Gastrocnemius medialis (tissue), 4 donors: ENCODE measurements at regions of chr1 and their contacts with region 1.

Region 1: GRCh38 chr1:112126598-112126997 is 137.1 kb upstream of the KCND3 start:
- DNase-seq: no peak
- ATAC-seq: no peak
- H3K4me3 ChIP-seq: no peak overlapping the region
- H3K27ac ChIP-seq: no peak overlapping the region
- H3K4me1 ChIP-seq: no peaks in the 10 kb centered on the region
- H3K27me3 ChIP-seq: no peaks in the 10 kb centered on the region
- CTCF ChIP-seq: no peak
- POLR2A ChIP-seq: no peak

Region 2: DNA sequence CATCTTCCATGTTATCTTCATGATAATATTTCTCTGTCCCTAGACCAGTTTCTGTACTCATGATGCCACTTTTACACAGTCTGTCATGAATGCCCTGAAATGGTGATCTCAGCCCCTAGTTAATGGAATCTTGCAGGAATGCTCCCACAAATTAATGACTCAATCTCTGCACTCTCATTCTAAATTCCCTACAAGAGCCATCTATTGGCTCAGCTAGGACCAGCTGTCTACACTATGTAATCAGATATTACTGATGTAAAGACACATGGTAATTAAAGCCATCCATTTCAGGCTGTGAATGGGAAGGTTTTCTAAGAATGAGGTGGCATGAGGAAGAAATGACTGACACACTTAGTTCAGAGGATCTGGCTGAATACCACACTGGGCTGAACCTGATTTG is 62.0 kb after region 1 on chr1:
- in situ Hi-C with region 1: loop called in 1 of 4 experiments (anchors 10 kb)
- intact Hi-C with region 1: no loop called
- DNase-seq: no peak
- ATAC-seq: no peak
- H3K4me3 ChIP-seq: no peak overlapping the region
- H3K27ac ChIP-seq: no peak overlapping the region
- H3K4me1 ChIP-seq: no peaks in the 10 kb centered on the region
- H3K27me3 ChIP-seq: no peaks in the 10 kb centered on the region
- CTCF ChIP-seq: no peak
- POLR2A ChIP-seq: no peak